Stomach (tissue), 19 donors: ENCODE measurements at regions of chr7 and their contacts with region 1.

Region 1: GRCh38 chr7:102279537-102280400 is 6.9 kb upstream of the SH2B2 start:
- DNase-seq: peak; percentile 53 to 89
- H3K4me3 ChIP-seq: no peak overlapping the region
- H3K27ac ChIP-seq: no peak overlapping the region
- H3K4me1 ChIP-seq: peaks cover 0 to 10% (median 6%) of the 10 kb centered on the region in 4 donors
- H3K27me3 ChIP-seq: no peaks in the 10 kb centered on the region
- CTCF ChIP-seq: peak in 5 of 7 experiments; percentile 70 to 86 (median 74)
- EP300 ChIP-seq: no peak
- POLR2A ChIP-seq: no peak

Region 2: DNA sequence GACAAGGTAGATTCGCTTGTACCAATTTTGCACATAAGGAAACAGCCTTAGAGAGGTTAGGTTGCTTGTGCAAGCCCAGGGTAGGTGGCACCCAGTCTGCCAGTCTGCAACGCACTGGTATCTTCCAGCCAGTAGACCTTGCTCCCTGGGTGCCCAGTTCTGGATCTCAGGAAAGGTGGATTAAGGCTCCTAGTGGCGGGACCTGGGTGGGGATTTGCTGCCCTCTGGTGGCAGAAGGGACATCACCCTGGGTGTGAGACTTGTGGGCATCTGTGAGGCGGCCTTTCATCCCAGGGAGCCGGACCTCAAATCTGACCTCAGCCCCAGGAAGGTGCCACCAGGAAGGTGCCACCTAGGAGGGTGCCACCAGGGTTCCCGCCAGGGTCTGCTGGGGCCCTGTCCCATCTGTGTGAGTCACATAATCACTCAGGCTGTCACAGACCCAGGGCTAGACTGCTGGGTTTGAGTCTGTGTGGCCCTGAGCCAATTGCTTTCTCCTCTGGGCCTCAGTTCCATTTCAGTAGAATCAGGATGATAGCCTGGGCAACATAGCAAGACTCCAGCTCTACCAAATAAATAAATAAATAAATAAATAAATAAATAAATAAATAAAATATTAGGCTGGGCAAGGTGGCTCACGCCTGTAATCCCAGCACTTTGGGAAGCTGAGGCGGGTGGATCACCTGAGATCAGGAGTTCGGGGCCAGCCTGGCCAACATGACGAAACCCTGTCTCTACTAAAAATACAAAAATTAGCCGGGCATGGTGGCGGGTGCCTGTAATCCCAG is 111.1 kb after region 1 on chr7:
- intact Hi-C with region 1: loop called (anchors 5 kb)
- DNase-seq: peak; percentile 89 to 92
- H3K4me3 ChIP-seq: no peak overlapping the region
- H3K27ac ChIP-seq: no peak overlapping the region
- H3K4me1 ChIP-seq: peaks cover 0 to 18% (median 8%) of the 10 kb centered on the region in 4 donors
- H3K27me3 ChIP-seq: no peaks in the 10 kb centered on the region
- CTCF ChIP-seq: peak in 5 of 7 experiments; percentile 80 to 92 (median 88)
- EP300 ChIP-seq: no peak
- POLR2A ChIP-seq: no peak

Region 3: GRCh38 chr7:102464577-102465280 is 185.0 kb after region 1 on chr7 and contains the starts of genes ALKBH4 and LRWD1:
- intact Hi-C with region 1: loop called (anchors 10 kb)
- DNase-seq: peak; percentile 97
- H3K4me3 ChIP-seq: peak within 1 kb of the TSS; percentile 95 to 100 (median 98)
- H3K27ac ChIP-seq: peak within 1 kb of the TSS; percentile 39 to 85 (median 78)
- H3K4me1 ChIP-seq: peaks cover 15 to 53% (median 43%) of the 10 kb centered on the region in 4 donors
- H3K27me3 ChIP-seq: no peaks in the 10 kb centered on the region
- CTCF ChIP-seq: no peak
- EP300 ChIP-seq: no peak
- POLR2A ChIP-seq: no peak
- total RNA-seq, gene ALKBH4: 1.2 to 27.4 (median 7.5) TPM
- total RNA-seq, gene LRWD1: 4.5 to 238 (median 14.7) TPM